Caco-2 (cell line): ENCODE measurements at regions of chr11 and their contacts with region 1.

Region 1: GRCh38 chr11:60515144-60515855 is at the start of gene MS4A13:
- DNase-seq: no peak
- H3K4me3 ChIP-seq: no peak within 1 kb of the TSS
- H3K4me3 Mint-ChIP-seq: no peak within 1 kb of the TSS
- H3K27ac Mint-ChIP-seq: no peak within 1 kb of the TSS
- H3K4me1 ChIP-seq: no peaks in the 10 kb centered on the region
- H3K4me1 Mint-ChIP-seq: no peaks in the 10 kb centered on the region
- H3K27me3 ChIP-seq: no peaks in the 10 kb centered on the region
- H3K27me3 Mint-ChIP-seq: peaks cover 3% of the 10 kb centered on the region
- CTCF ChIP-seq: no peak
- total RNA-seq, gene MS4A13: not detected in 2 replicates

Region 2: DNA sequence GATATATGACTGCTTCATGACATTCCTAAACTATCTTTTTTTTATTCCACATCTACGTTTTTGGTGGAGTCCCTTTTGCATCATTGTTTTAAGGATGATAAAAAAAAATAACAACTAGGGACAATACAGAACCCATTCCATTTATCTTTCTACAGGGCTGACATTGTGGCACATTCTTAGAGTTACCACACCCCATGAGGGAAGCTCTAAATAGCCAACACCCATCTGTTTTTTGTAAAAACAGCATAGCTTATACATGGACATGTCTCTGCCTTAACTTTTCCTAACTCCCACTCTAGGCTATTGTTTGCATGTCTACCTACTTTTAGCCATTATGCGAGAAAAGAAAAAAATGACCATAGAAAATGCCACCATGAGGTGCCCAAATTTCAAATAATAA is 46.5 kb before region 1 on chr11:
- CTCF ChIA-PET with region 1: no interaction called
- POLR2A ChIA-PET with region 1: no interaction called
- intact Hi-C with region 1: no loop called
- DNase-seq: no peak
- H3K4me3 ChIP-seq: no peak overlapping the region
- H3K4me3 Mint-ChIP-seq: no peak overlapping the region
- H3K27ac Mint-ChIP-seq: no peak overlapping the region
- H3K4me1 ChIP-seq: no peaks in the 10 kb centered on the region
- H3K4me1 Mint-ChIP-seq: no peaks in the 10 kb centered on the region
- H3K27me3 ChIP-seq: no peaks in the 10 kb centered on the region
- H3K27me3 Mint-ChIP-seq: peaks cover 6% of the 10 kb centered on the region
- CTCF ChIP-seq: no peak

Region 3: GRCh38 chr11:60594998-60595642 is 79.8 kb after region 1 on chr11:
- CTCF ChIA-PET with region 1: no interaction called
- POLR2A ChIA-PET with region 1: interaction called, 10 read pairs
- intact Hi-C with region 1: no loop called
- DNase-seq: no peak
- H3K4me3 ChIP-seq: no peak overlapping the region
- H3K4me3 Mint-ChIP-seq: no peak overlapping the region
- H3K27ac Mint-ChIP-seq: no peak overlapping the region
- H3K4me1 ChIP-seq: no peaks in the 10 kb centered on the region
- H3K4me1 Mint-ChIP-seq: no peaks in the 10 kb centered on the region
- H3K27me3 ChIP-seq: no peaks in the 10 kb centered on the region
- H3K27me3 Mint-ChIP-seq: no peaks in the 10 kb centered on the region
- CTCF ChIP-seq: no peak